CD8-positive, alpha-beta T cell (primary cell): ENCODE measurements at regions of chr15 and their contacts with region 1.

Region 1: DNA sequence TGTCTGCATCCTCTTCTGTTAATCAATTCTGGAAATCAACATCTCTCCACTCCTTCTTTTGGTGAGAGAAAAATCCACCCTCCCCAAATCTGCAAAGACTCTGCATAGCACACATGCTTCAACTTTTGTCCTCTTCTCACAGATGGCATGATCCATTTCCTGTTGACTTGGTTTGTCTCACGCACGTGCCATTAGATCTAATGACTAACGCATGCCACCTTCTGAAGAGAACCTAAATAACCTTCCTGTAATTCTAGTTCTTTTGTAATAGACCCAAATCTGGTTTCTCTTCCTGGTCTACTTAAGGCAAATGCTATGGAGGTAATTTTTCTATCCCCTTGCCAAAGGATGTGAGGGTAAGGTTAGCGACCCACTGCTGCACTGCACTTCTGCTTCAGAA is 51.0 kb upstream of the ATOSA start:
- DNase-seq: peak in 7 of 9 experiments; percentile 11 to 83 (median 63)
- ATAC-seq: peak; percentile 99
- H3K4me3 ChIP-seq: no peak overlapping the region
- H3K4me3 Mint-ChIP-seq: peak overlapping the region; percentile 3
- H3K27ac ChIP-seq: peak overlapping the region in 1 of 2 experiments; percentile 18
- H3K27ac Mint-ChIP-seq: peak overlapping the region; percentile 79
- H3K4me1 ChIP-seq: peaks cover 14% of the 10 kb centered on the region
- H3K4me1 Mint-ChIP-seq: peaks cover 15% of the 10 kb centered on the region
- H3K27me3 ChIP-seq: no peaks in the 10 kb centered on the region
- H3K27me3 Mint-ChIP-seq: no peaks in the 10 kb centered on the region
- CTCF ChIP-seq: peak; percentile 29

Region 2: DNA sequence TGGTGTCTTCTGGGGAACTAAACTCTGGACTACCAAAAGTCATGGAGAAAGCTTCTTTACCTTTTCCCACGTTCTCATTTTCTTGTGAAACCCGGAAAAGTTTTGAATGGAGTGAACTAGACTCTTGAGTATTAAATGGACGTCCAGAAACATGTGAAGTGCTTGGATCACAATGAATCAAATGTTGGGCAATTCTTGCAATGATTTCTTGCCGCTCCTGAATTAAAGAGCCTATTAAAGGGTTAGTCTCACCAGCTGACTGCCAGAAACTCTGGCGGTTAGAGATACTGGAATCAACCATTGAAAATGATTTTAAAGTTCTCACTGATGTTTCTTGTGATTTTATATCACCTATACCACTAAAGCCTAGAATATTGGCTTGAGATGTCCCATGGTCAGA is 120.6 kb before region 1 on chr15:
- CTCF ChIA-PET with region 1: interaction called, 3 read pairs
- POLR2A ChIA-PET with region 1: no interaction called
- intact Hi-C with region 1: loop called (anchors 5 kb)
- DNase-seq: no peak
- ATAC-seq: no peak
- H3K4me3 ChIP-seq: no peak overlapping the region
- H3K4me3 Mint-ChIP-seq: no peak overlapping the region
- H3K27ac ChIP-seq: no peak overlapping the region
- H3K27ac Mint-ChIP-seq: no peak overlapping the region
- H3K4me1 ChIP-seq: no peaks in the 10 kb centered on the region
- H3K4me1 Mint-ChIP-seq: no peaks in the 10 kb centered on the region
- H3K27me3 ChIP-seq: no peaks in the 10 kb centered on the region
- H3K27me3 Mint-ChIP-seq: no peaks in the 10 kb centered on the region
- CTCF ChIP-seq: no peak

Region 3: DNA sequence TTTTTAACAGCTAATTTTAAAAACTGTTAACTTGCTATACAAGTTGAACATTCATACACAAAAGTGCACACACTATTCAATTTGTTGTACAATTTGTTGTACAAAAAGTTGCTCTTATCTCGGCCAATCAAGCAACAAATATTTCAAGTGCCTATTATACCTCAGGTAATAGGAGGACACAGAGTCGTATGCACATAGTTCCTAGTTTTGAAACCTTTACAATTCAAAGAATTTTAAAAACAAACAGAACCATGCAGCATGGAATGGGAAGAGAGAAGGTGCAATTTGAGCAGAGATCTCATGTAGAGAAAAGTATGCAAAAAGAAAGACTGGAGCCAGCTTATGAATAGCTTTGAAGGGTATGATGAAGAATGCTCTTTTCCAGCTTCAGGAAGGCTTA is 114.9 kb before region 1 on chr15:
- CTCF ChIA-PET with region 1: interaction called, 3 read pairs
- POLR2A ChIA-PET with region 1: no interaction called
- intact Hi-C with region 1: loop called in 1 of 2 experiments (anchors 5 kb)
- DNase-seq: no peak
- ATAC-seq: no peak
- H3K4me3 ChIP-seq: no peak overlapping the region
- H3K4me3 Mint-ChIP-seq: no peak overlapping the region
- H3K27ac ChIP-seq: no peak overlapping the region
- H3K27ac Mint-ChIP-seq: no peak overlapping the region
- H3K4me1 ChIP-seq: no peaks in the 10 kb centered on the region
- H3K4me1 Mint-ChIP-seq: peaks cover 2% of the 10 kb centered on the region
- H3K27me3 ChIP-seq: no peaks in the 10 kb centered on the region
- H3K27me3 Mint-ChIP-seq: no peaks in the 10 kb centered on the region
- CTCF ChIP-seq: no peak

Region 4: GRCh38 chr15:52626671-52627369 is 103.4 kb before region 1 on chr15:
- CTCF ChIA-PET with region 1: no interaction called
- POLR2A ChIA-PET with region 1: interaction called, 5 read pairs
- intact Hi-C with region 1: loop called in 1 of 2 experiments (anchors 5 kb)
- DNase-seq: no peak
- ATAC-seq: no peak
- H3K4me3 ChIP-seq: no peak overlapping the region
- H3K4me3 Mint-ChIP-seq: no peak overlapping the region
- H3K27ac ChIP-seq: no peak overlapping the region
- H3K27ac Mint-ChIP-seq: peak overlapping the region; percentile 58
- H3K4me1 ChIP-seq: no peaks in the 10 kb centered on the region
- H3K4me1 Mint-ChIP-seq: peaks cover 24% of the 10 kb centered on the region
- H3K27me3 ChIP-seq: no peaks in the 10 kb centered on the region
- H3K27me3 Mint-ChIP-seq: no peaks in the 10 kb centered on the region
- CTCF ChIP-seq: no peak

Region 5: GRCh38 chr15:52749258-52749657 is 19.1 kb after region 1 on chr15:
- CTCF ChIA-PET with region 1: no interaction called
- POLR2A ChIA-PET with region 1: no interaction called
- intact Hi-C with region 1: no loop called
- DNase-seq: no peak
- ATAC-seq: no peak
- H3K4me3 ChIP-seq: no peak overlapping the region
- H3K4me3 Mint-ChIP-seq: no peak overlapping the region
- H3K27ac ChIP-seq: no peak overlapping the region
- H3K27ac Mint-ChIP-seq: no peak overlapping the region
- H3K4me1 ChIP-seq: no peaks in the 10 kb centered on the region
- H3K4me1 Mint-ChIP-seq: no peaks in the 10 kb centered on the region
- H3K27me3 ChIP-seq: no peaks in the 10 kb centered on the region
- H3K27me3 Mint-ChIP-seq: peaks cover 43% of the 10 kb centered on the region
- CTCF ChIP-seq: no peak

Region 6: GRCh38 chr15:52765785-52766184 is 35.6 kb after region 1 on chr15:
- CTCF ChIA-PET with region 1: no interaction called
- POLR2A ChIA-PET with region 1: no interaction called
- intact Hi-C with region 1: no loop called
- DNase-seq: no peak
- ATAC-seq: no peak
- H3K4me3 ChIP-seq: no peak overlapping the region
- H3K4me3 Mint-ChIP-seq: no peak overlapping the region
- H3K27ac ChIP-seq: no peak overlapping the region
- H3K27ac Mint-ChIP-seq: no peak overlapping the region
- H3K4me1 ChIP-seq: no peaks in the 10 kb centered on the region
- H3K4me1 Mint-ChIP-seq: no peaks in the 10 kb centered on the region
- H3K27me3 ChIP-seq: peaks cover 0 to 3% of the 10 kb centered on the region in 2 experiments
- H3K27me3 Mint-ChIP-seq: peaks cover 41% of the 10 kb centered on the region
- CTCF ChIP-seq: no peak